ENCODE measurements at regions of chr6 and their contacts with region 1.

Region 1: DNA sequence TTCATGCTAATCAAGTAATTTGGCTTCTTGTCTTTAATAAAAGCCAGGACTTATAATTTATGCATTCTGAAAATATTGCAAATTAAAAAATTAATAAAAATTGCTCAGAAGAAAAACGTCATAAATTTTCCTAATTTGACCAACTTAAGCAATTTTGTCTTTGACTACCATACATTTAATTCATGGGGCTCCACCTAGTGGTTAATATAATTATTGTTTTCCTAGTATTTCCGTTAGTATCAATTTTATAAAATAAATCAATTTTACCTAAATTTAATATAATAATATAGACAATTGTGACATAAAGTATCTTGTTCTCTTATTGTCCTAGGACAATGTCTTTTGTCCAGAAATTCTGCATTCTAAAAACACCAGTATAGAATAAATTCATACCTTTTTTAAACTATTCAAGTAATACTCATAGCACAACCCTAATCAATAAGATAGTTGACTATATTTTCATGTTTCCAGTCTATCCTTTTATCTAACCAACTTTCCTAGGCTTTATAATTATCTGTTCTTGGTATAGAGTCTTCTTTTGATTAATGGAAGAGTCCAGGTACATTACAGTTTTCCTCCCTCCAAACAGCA is 319.9 kb downstream of the TRDN start:
- DNase-seq: no peak
- H3K4me3 ChIP-seq: no peak overlapping the region
- H3K27ac ChIP-seq: no peak overlapping the region
- H3K4me1 ChIP-seq: no peaks in the 10 kb centered on the region
- H3K27me3 ChIP-seq: no peaks in the 10 kb centered on the region
- CTCF ChIP-seq: peak; percentile 70

Region 2: GRCh38 chr6:122869437-122870024 is 447.3 kb before region 1 on chr6:
- intact Hi-C with region 1: loop called (anchors 10 kb)
- DNase-seq: no peak
- H3K4me3 ChIP-seq: no peak overlapping the region
- H3K27ac ChIP-seq: no peak overlapping the region
- H3K4me1 ChIP-seq: no peaks in the 10 kb centered on the region
- H3K27me3 ChIP-seq: peaks cover 18% of the 10 kb centered on the region
- CTCF ChIP-seq: peak; percentile 69

Region 3: DNA sequence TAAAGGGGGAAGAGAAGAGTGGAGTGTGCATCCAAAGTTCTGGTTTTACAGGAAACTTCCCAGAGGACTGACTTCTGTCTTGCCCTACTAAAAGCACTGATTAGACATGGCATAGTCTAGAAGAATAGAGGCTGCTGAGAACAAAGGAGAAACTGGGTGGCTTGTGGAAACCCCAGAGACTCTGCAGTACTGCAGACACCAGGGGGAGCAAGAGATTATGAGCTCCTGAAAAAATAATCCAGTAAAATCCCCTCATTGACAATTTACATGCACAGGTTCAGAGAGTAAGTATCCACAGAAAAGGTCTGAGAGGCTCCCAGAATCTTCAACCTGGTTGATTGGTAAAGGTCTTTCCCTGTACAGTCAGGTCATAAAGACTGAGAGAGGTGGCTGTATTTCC is 369.5 kb before region 1 on chr6:
- intact Hi-C with region 1: loop called (anchors 10 kb)
- DNase-seq: no peak
- H3K4me3 ChIP-seq: no peak overlapping the region
- H3K27ac ChIP-seq: no peak overlapping the region
- H3K4me1 ChIP-seq: no peaks in the 10 kb centered on the region
- H3K27me3 ChIP-seq: peaks cover 9% of the 10 kb centered on the region
- CTCF ChIP-seq: peak; percentile 44

Region 4: GRCh38 chr6:123380257-123380656 is 63.4 kb after region 1 on chr6:
- intact Hi-C with region 1: no loop called
- DNase-seq: no peak
- H3K4me3 ChIP-seq: no peak overlapping the region
- H3K27ac ChIP-seq: no peak overlapping the region
- H3K4me1 ChIP-seq: no peaks in the 10 kb centered on the region
- H3K27me3 ChIP-seq: no peaks in the 10 kb centered on the region
- CTCF ChIP-seq: peak; percentile 51

Region 5: DNA sequence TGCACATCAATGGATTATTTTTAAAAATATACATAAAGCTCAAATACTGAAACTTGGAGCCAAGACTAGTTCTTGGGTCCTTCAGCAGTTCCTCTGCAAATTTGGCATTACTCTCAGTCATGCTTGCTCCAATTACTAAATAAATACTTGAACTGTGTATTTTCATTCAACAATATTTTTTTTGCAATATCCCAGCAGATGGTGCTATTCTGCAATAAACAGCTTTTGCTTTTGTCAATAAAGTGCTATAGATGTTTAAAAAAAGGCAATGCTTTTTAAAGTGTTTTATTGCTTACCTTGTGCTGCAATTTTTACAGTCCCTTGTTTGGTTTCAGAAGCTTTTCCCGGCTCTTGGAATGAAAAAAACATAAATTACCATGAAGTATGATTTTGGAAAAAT is 76.5 kb after region 1 on chr6:
- intact Hi-C with region 1: no loop called
- DNase-seq: no peak
- H3K4me3 ChIP-seq: no peak overlapping the region
- H3K27ac ChIP-seq: no peak overlapping the region
- H3K4me1 ChIP-seq: no peaks in the 10 kb centered on the region
- H3K27me3 ChIP-seq: no peaks in the 10 kb centered on the region
- CTCF ChIP-seq: peak; percentile 49

Measured in left ventricle myocardium inferior (tissue), 1 donor.